Right lobe of liver (tissue), 6 donors: ENCODE measurements at regions of chr1 and their contacts with region 1.

Region 1: GRCh38 chr1:227234998-227235405 is 83.3 kb downstream of the CDC42BPA start:
- DNase-seq: no peak
- ATAC-seq: peak; percentile 94 to 98 (median 94)
- H3K4me3 ChIP-seq: no peak overlapping the region
- H3K27ac ChIP-seq: no peak overlapping the region
- H3K4me1 ChIP-seq: peaks cover 0 to 2% (median 0%) of the 10 kb centered on the region in 4 donors
- H3K27me3 ChIP-seq: no peaks in the 10 kb centered on the region
- CTCF ChIP-seq: peak; percentile 49 to 59 (median 56)
- POLR2A ChIP-seq: no peak

Region 2: GRCh38 chr1:227437495-227438008 is 202.6 kb after region 1 on chr1:
- intact Hi-C with region 1: loop called (anchors 10 kb)
- DNase-seq: no peak
- ATAC-seq: peak; percentile 84 to 94 (median 89)
- H3K4me3 ChIP-seq: peak overlapping the region; percentile 21 to 32 (median 25)
- H3K27ac ChIP-seq: no peak overlapping the region
- H3K4me1 ChIP-seq: no peaks in the 10 kb centered on the region
- H3K27me3 ChIP-seq: no peaks in the 10 kb centered on the region
- CTCF ChIP-seq: peak; percentile 50 to 60 (median 52)
- POLR2A ChIP-seq: no peak

Region 3: GRCh38 chr1:227449051-227449450 is 214.0 kb after region 1 on chr1:
- intact Hi-C with region 1: loop called in 1 of 2 experiments (anchors 10 kb)
- DNase-seq: no peak
- ATAC-seq: peak in 3 of 4 donors; percentile 27 to 62 (median 31)
- H3K4me3 ChIP-seq: no peak overlapping the region
- H3K27ac ChIP-seq: no peak overlapping the region
- H3K4me1 ChIP-seq: no peaks in the 10 kb centered on the region
- H3K27me3 ChIP-seq: no peaks in the 10 kb centered on the region
- CTCF ChIP-seq: peak; percentile 5 to 40 (median 26)
- POLR2A ChIP-seq: no peak